GM10248 (cell line): ENCODE measurements at regions of chr3 and their contacts with region 1.

Region 1: DNA sequence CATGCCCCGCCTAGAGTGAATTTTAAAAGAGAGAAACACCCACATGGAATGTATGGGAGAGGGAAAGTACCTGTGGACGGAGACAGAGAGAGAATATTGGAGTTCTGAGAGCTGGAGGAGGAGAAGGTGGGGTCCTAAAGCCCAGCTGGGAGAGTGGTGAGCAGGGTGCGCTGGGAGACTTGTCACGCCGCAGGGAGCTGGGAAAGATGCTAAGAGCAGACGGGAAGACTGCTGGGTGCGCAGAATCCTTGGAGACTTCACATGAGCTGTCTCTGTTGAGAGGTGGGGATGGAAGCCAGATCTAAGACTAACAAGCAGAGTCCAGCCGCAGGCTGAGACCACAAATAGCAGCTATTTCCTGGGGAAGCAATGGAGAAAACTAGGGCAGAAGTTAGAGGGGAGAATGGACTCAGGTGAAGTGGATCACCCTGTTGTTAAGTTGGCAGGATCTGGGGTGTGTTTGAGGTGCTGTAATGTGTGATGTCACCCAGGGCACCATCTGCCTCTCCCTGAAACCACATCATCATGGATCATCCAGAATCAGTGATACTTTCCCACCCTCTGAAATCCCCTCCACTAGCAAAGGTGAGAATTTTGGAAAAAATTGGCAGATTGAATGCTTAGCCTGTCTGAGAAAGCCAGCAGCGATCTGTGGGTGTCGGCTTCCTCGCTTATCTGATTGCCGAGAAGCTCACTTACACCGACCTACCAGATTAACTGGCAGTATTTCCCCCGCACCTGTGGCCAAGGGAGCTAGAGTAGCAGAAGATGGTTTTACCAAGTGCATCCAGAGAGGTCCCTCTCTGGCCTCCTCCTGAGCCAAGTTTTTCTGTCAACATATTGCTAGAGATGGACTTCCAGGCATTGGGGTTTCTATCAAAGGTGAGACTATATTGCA is 174.8 kb upstream of the BHLHE40 start:
- DNase-seq: no peak
- CTCF ChIP-seq: no peak

Region 2: DNA sequence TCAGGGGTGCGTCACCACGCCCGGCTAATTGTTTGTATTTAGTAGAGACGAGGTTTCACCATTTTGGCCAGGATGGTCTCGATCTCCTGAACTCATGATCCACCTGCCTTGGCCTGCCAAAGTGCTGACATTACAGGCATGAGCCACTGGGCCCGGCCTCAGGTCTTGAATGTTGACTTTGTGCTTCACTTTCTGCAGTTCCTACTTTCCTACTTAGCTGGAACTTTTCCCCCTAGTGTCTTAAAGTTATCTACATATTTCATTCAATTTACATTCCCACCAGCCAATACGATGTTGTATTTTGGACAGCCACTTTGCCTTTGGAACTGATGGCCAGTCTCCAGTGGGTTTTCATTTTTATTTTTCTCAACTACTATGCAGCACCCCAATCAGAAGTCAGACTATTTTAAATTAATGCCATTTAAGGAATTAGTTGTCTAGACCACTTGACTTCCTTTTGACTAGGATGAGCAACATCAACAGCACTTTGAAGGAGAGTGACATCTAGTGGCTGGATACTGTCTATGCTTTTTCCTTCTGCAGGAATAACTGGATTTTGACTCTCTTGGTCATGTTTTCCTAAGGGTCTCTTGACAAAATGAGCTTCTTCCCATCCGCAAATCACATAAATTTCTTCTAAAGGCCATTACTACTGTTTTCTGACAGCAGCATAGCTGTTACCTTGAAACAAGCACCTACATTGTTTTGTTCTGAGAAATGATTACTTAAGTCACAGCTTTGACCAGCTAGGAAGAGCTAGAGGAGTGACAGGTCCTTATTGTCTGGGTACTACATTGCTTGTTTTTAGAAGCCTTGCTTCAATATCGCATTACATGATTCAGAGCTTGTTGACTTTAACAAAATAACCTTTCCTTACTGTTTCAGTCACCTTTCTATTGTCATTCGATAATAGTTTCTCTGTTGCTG is 171.1 kb before region 1 on chr3:
- CTCF ChIA-PET with region 1: no interaction called
- POLR2A ChIA-PET with region 1: no interaction called
- DNase-seq: peak; percentile 68
- CTCF ChIP-seq: peak; percentile 76

Region 3: GRCh38 chr3:4786431-4786830 is 18.0 kb before region 1 on chr3:
- CTCF ChIA-PET with region 1: interaction called, 10 read pairs
- POLR2A ChIA-PET with region 1: no interaction called
- DNase-seq: no peak
- CTCF ChIP-seq: no peak

Region 4: GRCh38 chr3:4826237-4827100 is 22.1 kb after region 1 on chr3:
- CTCF ChIA-PET with region 1: interaction called, 12 read pairs
- POLR2A ChIA-PET with region 1: no interaction called
- DNase-seq: no peak
- CTCF ChIP-seq: no peak

Region 5: DNA sequence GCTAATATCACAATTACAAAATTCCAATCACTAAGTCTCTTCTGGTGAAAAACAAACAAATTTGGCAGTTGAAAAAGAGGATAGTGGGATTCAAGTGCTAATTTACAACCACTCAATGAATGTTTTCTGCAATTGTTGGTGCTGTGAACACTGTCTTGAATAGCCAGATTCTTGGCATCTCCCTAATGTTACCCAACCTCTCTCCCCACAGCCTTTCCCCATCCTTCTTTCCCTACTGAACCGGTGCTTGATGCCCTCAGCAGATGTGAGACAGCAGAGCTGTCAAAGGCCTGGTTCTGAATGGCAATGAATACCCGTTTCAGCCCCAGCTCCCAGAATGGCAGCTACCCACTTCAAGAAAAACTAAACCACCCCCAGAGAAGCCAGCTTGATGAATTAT is 152.3 kb after region 1 on chr3:
- CTCF ChIA-PET with region 1: no interaction called
- POLR2A ChIA-PET with region 1: no interaction called
- DNase-seq: no peak
- CTCF ChIP-seq: no peak